ENCODE measurements at regions of chr14 and their contacts with region 1.

Region 1: GRCh38 chr14:36398463-36399260 is 78.2 kb upstream of the MBIP start:
- DNase-seq: no peak
- H3K4me3 ChIP-seq: no peak overlapping the region
- H3K27ac ChIP-seq: no peak overlapping the region
- H3K4me1 ChIP-seq: no peaks in the 10 kb centered on the region
- H3K27me3 ChIP-seq: no peaks in the 10 kb centered on the region
- CTCF ChIP-seq: no peak
- POLR2A ChIP-seq: no peak

Region 2: DNA sequence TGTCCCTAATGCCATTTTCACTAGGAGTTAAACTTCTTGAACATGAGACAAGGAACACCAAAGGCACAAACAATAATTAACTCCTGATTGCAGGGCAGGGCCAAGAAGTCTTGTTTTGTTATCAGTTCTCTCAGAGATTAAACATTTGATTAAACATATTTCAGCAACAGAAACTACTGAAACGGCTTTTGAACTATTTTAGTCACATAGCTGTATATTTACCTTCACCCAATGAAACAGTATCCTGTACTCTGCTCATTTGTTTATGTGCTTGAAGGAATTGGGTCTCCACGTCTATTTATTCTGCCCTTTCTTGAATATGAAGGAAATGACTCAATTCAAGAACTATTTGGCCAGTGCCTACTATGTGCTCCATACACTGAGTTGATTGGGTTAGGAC is 170.9 kb before region 1 on chr14:
- intact Hi-C with region 1: no loop called
- DNase-seq: no peak
- H3K4me3 ChIP-seq: no peak overlapping the region
- H3K27ac ChIP-seq: no peak overlapping the region
- H3K4me1 ChIP-seq: no peaks in the 10 kb centered on the region
- H3K27me3 ChIP-seq: no peaks in the 10 kb centered on the region
- CTCF ChIP-seq: no peak
- POLR2A ChIP-seq: no peak

Region 3: DNA sequence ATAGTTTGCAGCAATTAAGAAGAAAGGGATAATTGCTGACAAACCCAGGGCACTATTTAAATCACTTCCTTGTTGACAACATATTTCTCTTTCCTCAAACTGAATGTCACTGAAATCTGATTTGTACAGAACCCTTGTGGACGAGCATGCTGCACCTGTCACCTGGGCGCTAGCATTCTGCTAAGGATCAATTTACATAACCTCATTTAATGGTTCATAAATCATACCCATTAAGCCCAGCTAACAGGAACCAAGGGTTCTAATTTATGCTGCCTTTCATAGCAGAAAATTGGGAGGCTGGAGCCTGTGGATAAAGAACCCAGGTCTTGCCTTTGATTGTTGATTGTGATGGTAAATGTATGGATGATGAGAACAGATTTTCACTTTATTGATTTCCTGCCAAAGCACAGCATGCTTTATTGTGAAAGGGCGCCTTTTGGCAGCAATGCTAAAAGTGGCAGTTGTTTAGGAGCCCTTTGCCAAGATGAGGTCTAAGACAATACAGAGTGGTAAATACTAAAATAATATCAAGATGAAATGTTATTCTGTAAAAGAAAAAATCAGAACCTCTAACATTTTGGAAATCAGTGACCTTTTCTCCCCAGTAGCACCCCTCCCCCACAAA is 25.9 kb after region 1 on chr14:
- intact Hi-C with region 1: loop called (anchors 1 kb)
- DNase-seq: no peak
- H3K4me3 ChIP-seq: no peak overlapping the region
- H3K27ac ChIP-seq: no peak overlapping the region
- H3K4me1 ChIP-seq: no peaks in the 10 kb centered on the region
- H3K27me3 ChIP-seq: no peaks in the 10 kb centered on the region
- CTCF ChIP-seq: no peak
- POLR2A ChIP-seq: no peak

Region 4: GRCh38 chr14:38098074-38098836 is 1699.6 kb after region 1 on chr14:
- intact Hi-C with region 1: no loop called
- DNase-seq: no peak
- H3K4me3 ChIP-seq: no peak overlapping the region
- H3K27ac ChIP-seq: no peak overlapping the region
- H3K4me1 ChIP-seq: no peaks in the 10 kb centered on the region
- H3K27me3 ChIP-seq: no peaks in the 10 kb centered on the region
- CTCF ChIP-seq: no peak
- POLR2A ChIP-seq: no peak

Measured in breast epithelium (tissue), 4 donors.